Motor neuron (in vitro differentiated cells): ENCODE measurements at regions of chr15 and their contacts with region 1.

Region 1: GRCh38 chr15:60326824-60327654 is 70.7 kb downstream of the ANXA2 start:
- ATAC-seq: peak in 6 of 8 experiments; percentile 30 to 57 (median 42)
- H3K4me3 ChIP-seq: no peak overlapping the region
- H3K27ac ChIP-seq: no peak overlapping the region
- H3K4me1 ChIP-seq: peaks cover 24 to 34% of the 10 kb centered on the region in 2 donors

Region 2: GRCh38 chr15:59699810-59700431 is 627.1 kb before region 1 on chr15:
- in situ Hi-C with region 1: loop called in 1 of 9 experiments (anchors 25 kb)
- ATAC-seq: peak in 3 of 8 experiments; percentile 42 to 48 (median 47)
- H3K4me3 ChIP-seq: no peak overlapping the region
- H3K27ac ChIP-seq: no peak overlapping the region
- H3K4me1 ChIP-seq: no peaks in the 10 kb centered on the region

Region 3: GRCh38 chr15:59725172-59725486 is 601.9 kb before region 1 on chr15:
- in situ Hi-C with region 1: loop called in 8 of 9 experiments (anchors 10 to 25 kb)
- ATAC-seq: no peak
- H3K4me3 ChIP-seq: no peak overlapping the region
- H3K27ac ChIP-seq: no peak overlapping the region
- H3K4me1 ChIP-seq: peaks cover 10 to 18% of the 10 kb centered on the region in 2 donors

Region 4: GRCh38 chr15:60052796-60053195 is 274.2 kb before region 1 on chr15:
- in situ Hi-C with region 1: no loop called
- ATAC-seq: no peak
- H3K4me3 ChIP-seq: no peak overlapping the region
- H3K27ac ChIP-seq: no peak overlapping the region
- H3K4me1 ChIP-seq: no peaks in the 10 kb centered on the region